SK-N-SH (cell line): ENCODE measurements at regions of chr6 and their contacts with region 1.

Region 1: DNA sequence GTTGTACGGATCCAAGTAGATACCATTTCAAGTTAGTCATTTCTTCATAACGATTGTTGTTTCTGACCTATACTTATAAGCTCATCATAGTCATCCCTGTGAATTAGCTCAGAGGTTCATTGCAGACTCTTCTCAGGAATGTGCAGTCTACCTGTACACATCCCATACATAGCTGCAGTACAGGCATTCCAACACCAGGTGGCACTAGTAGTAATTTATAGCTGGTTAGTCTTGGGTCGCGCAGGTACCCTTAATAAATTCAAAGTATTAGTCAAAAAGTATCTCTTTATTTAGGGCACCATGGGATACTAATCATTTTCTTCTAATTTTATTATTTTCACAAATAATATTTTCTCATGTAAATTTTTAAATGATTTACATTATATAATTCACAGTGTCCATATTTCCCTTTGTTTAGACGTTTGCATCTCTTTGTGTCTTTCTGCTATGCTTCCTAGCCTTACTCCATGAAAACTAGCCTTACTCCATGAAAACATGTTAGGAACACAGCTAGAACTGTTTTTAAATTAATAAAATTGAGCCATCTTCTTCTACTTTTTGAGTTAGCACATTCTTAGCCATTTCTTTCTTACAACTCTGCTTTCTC is 128.6 kb upstream of the FAM83B start:
- DNase-seq: peak; percentile 29
- H3K4me3 ChIP-seq: no peak overlapping the region
- H3K27ac ChIP-seq: no peak overlapping the region
- H3K4me1 ChIP-seq: no peaks in the 10 kb centered on the region; a peak in 1 of 4 replicates
- H3K27me3 ChIP-seq: no peaks in the 10 kb centered on the region; the same call in 1 of the 2 replicates
- CTCF ChIP-seq: peak; percentile 91
- EP300 ChIP-seq: no peak
- RAD21 ChIP-seq: peak; percentile 59

Region 2: DNA sequence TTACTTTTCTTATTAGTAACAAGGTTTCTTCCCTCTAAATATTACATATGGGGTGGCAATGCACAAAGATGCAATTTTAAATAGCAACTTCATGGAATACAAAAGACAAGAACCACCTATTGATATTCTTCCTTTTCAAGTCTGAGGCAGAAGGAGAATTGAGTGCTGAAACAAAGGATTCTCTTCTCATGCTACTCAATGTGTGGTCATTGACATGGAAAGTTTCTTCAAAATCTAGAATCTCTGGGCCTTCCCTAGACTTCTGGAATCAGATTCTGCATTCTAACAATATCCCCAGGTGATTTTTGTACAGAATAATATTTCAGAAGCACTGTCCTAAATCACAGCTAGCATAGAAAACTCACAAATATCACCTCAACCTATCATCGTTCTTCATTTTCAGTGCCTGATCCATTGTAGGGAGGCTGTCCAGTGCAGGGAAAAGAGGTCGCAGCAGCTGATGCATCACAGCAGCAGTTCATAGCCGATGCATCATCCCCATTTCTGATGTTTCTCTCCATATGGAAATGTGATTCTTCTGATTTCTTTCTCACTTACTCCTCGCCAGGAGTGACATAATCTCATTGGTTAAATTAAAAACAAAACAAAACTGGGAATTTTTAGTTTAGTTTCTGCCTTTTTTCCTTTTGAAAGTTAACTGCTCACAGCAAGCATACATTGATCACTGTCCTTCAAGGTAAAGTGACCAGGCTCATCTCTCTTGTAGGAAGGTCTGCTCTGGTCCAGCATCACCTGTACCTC is 10.9 kb before region 1 on chr6:
- CTCF ChIA-PET with region 1: interaction called, 24 read pairs
- POLR2A ChIA-PET with region 1: no interaction called
- DNase-seq: no peak
- H3K4me3 ChIP-seq: no peak overlapping the region
- H3K27ac ChIP-seq: no peak overlapping the region
- H3K4me1 ChIP-seq: no peaks in the 10 kb centered on the region
- H3K27me3 ChIP-seq: no peaks in the 10 kb centered on the region; the same call in 1 of the 2 replicates
- CTCF ChIP-seq: no peak
- EP300 ChIP-seq: no peak
- RAD21 ChIP-seq: no peak

Region 3: GRCh38 chr6:54737247-54737646 is 19.3 kb after region 1 on chr6:
- CTCF ChIA-PET with region 1: interaction called, 16 read pairs
- POLR2A ChIA-PET with region 1: no interaction called
- DNase-seq: peak; percentile 24
- H3K4me3 ChIP-seq: no peak overlapping the region; a peak in 1 of 4 replicates
- H3K27ac ChIP-seq: no peak overlapping the region
- H3K4me1 ChIP-seq: no peaks in the 10 kb centered on the region
- H3K27me3 ChIP-seq: no peaks in the 10 kb centered on the region
- CTCF ChIP-seq: peak; percentile 62
- EP300 ChIP-seq: no peak
- RAD21 ChIP-seq: no peak

Region 4: GRCh38 chr6:54747955-54748354 is 30.0 kb after region 1 on chr6:
- CTCF ChIA-PET with region 1: interaction called, 17 read pairs
- POLR2A ChIA-PET with region 1: no interaction called
- DNase-seq: no peak
- H3K4me3 ChIP-seq: no peak overlapping the region
- H3K27ac ChIP-seq: no peak overlapping the region
- H3K4me1 ChIP-seq: no peaks in the 10 kb centered on the region
- H3K27me3 ChIP-seq: no peaks in the 10 kb centered on the region
- CTCF ChIP-seq: no peak
- EP300 ChIP-seq: no peak
- RAD21 ChIP-seq: no peak

Region 5: DNA sequence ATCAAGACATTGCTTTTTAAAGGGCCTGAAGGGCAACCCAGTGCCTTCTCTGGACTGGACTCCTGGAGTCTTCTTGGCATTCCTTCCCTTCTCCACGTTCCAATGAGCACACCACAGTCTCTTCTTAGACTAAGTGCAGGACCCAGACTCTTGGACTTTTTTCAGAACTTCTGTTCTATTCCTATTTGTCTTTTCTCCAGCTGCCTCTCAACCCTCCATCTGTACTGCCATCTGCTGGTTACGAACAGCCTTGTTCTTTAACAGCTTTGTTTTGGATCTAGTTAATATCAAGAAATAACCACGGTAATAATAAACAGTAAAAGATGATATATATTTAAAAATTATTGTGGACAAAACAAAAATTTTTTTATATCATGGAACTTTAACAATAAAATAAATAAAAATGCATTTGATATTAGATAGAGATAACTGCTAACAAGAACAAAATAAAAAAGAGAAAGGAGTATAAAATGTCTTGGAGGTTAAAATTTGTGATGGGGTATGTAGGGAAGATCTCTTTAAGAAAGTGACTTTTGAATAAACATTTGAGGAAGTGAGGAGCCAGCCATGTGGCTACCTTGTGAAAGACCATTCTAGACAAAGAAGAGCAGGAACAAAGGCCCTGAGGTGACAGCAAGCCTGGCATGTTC is 351.3 kb after region 1 on chr6:
- CTCF ChIA-PET with region 1: interaction called, 11 read pairs
- POLR2A ChIA-PET with region 1: no interaction called
- DNase-seq: peak; percentile 11
- H3K4me3 ChIP-seq: no peak overlapping the region
- H3K27ac ChIP-seq: no peak overlapping the region
- H3K4me1 ChIP-seq: no peaks in the 10 kb centered on the region
- H3K27me3 ChIP-seq: no peaks in the 10 kb centered on the region
- CTCF ChIP-seq: peak; percentile 76
- EP300 ChIP-seq: no peak
- RAD21 ChIP-seq: peak; percentile 69